ENCODE measurements at regions of chr1 and their contacts with region 1.

Region 1: DNA sequence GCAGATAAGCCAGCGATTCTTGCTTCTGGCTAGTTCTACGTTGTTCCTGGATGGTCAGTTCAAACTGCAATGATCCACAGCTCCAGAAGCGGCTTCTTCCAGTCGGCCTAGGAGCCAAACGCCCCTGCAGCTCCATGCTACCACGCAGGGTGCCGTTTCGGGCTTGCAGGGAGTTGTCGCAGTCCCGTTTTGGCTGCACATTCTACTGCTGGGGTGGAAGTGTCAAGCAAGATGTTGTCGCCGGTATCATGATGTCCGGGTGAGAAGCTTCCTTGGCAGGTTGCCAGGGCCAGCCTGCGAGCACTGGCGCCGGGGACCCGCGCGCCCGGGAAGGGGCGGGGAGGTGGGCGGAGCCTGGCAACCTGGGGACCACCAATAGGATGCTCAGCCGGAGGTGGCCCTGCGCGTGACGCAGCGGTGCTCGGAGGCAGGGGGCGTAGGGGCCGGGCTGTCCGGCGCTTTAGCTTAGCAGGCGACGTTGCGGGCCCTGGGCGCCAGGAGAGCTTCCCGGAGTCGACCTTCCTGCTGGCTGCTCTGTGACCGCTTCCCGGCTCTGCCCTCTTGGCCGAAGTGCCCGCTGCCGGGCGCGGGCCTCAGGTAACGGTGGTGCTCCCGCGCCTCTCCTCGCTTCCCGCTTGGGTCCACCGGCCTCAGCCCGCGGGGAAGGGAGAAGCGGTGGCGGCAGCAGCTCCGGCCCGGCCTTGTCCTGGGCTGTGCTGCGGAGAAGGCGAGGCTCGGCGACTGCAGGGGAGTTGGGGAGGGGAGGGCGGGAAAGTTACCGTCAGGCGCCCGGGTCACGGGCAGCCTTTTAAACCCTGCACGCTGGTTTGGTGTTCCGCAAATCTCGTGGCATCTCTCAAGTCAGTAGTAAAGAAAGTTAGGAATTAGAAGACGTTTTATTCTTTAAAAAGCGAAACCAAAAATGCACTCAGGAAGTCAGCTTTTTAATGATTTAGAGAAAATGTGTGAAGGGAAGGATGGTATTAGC is at the start of gene SOAT1:
- DNase-seq: peak; percentile 76 to 96
- H3K4me3 ChIP-seq: peak within 1 kb of the TSS; percentile 88 to 94
- H3K27ac ChIP-seq: peak within 1 kb of the TSS; percentile 93 to 97
- H3K4me1 ChIP-seq: peaks cover 3 to 10% of the 10 kb centered on the region in 2 donors
- H3K27me3 ChIP-seq: no peaks in the 10 kb centered on the region
- CTCF ChIP-seq: peak in 1 of 3 experiments; percentile 10
- total RNA-seq, gene SOAT1: 10.6 TPM

Region 2: DNA sequence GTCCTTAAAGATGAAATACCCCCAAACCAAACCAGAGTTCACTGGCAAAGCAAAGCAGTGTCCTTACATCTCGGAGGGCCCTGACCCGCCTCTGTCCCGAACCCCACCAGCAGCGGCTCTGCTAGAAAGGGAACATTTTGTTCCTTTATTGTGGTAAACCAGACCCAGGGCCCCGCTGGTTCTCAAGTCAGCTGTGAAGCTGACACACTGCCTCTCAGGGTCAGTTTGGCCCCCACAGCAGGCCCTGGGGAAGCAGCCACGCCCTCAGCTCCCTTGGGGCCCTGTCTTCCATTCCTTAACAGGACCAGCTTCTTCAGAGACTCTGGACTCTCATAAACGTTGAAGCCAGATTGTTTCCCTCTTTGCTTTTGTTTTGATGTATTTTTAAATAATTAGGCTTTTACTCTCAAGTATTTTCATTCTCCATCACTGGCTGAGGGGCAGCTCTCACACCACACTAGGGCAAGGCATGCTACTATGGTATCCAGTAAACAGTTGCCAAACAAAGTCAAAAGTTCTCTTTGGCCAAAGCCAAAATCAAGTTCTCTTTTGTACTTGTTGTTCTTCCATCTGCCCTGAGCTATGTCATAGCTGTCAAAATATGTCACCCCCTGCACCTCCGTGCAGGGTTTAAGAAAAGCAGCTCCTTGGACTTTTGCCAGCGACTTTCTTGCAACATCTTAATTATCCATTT is 361.6 kb before region 1 on chr1:
- intact Hi-C with region 1: loop called (anchors 5 kb)
- DNase-seq: peak in 1 of 2 donors; percentile 93
- H3K4me3 ChIP-seq: no peak overlapping the region
- H3K27ac ChIP-seq: peak overlapping the region; percentile 84 to 86
- H3K4me1 ChIP-seq: peaks cover 22 to 33% of the 10 kb centered on the region in 2 donors
- H3K27me3 ChIP-seq: no peaks in the 10 kb centered on the region
- CTCF ChIP-seq: no peak

Region 3: GRCh38 chr1:179081687-179082332 is 211.8 kb before region 1 on chr1 and contains the start of gene TOR3A:
- intact Hi-C with region 1: loop called (anchors 1 kb)
- DNase-seq: peak; percentile 76 to 95
- H3K4me3 ChIP-seq: peak within 1 kb of the TSS; percentile 74 to 84
- H3K27ac ChIP-seq: peak within 1 kb of the TSS; percentile 83 to 85
- H3K4me1 ChIP-seq: peaks cover 0 to 11% of the 10 kb centered on the region in 2 donors
- H3K27me3 ChIP-seq: no peaks in the 10 kb centered on the region
- CTCF ChIP-seq: peak in 1 of 3 experiments; percentile 2
- total RNA-seq, gene TOR3A: 109 TPM

Region 4: GRCh38 chr1:179190861-179191260 is 102.8 kb before region 1 on chr1:
- intact Hi-C with region 1: no loop called
- DNase-seq: no peak
- H3K4me3 ChIP-seq: no peak overlapping the region
- H3K27ac ChIP-seq: peak overlapping the region in 1 of 2 donors; percentile 4
- H3K4me1 ChIP-seq: no peaks in the 10 kb centered on the region
- H3K27me3 ChIP-seq: no peaks in the 10 kb centered on the region
- CTCF ChIP-seq: no peak

Region 5: DNA sequence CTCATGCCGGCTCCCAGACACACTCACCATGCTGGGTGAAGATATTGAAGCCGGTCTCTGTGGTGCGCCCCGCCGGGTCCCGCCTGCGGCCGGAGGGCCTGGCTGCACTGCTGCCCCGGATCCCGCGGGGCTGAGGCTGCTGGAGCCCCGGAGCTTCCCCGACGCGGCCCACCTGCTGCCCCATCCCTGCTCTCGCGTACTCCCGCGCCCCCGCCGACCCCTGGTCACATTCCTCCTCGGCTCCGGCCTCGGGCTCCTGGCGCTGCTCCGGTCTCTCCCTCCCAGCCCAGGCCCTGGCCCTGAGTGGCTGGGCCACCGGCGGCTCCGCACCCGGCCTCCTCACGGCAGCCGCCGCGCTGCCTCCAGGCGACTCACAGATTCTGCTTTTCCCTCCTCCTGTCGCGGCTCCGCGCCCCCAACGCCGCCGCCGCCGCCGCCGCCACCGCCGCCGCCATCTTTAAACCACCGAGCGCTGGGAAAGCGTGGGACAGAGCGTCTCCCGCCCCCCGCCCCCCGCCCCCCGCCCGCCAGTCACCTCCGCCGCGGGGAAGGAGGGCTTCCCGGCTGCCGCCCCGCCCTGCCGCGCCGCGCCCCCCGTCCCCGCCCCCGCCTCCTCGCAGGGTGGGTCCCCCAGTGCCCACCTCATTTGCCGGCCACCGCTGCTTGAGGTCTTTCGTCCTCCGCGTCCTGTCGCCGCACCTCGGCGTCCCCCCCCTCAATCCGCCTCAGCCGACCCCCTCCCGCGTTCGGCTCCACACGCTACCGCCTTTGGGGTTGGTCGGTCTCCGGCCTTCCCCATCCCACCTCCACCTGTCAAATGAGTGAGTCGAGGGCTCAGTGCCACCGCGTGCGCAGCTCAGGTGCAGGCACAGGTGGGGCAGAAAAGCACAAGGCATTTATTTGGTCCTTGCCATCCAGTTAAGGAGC is 64.2 kb before region 1 on chr1 and contains the start of gene ABL2:
- intact Hi-C with region 1: loop called (anchors 5 kb)
- DNase-seq: peak in 1 of 2 donors; percentile 69
- H3K4me3 ChIP-seq: peak within 1 kb of the TSS; percentile 95 to 100
- H3K27ac ChIP-seq: peak within 1 kb of the TSS; percentile 87 to 95
- H3K4me1 ChIP-seq: peaks cover 0 to 20% of the 10 kb centered on the region in 2 donors
- H3K27me3 ChIP-seq: no peaks in the 10 kb centered on the region
- CTCF ChIP-seq: no peak
- total RNA-seq, gene ABL2: 23.9 TPM

Region 6: GRCh38 chr1:179241523-179242097 is 52.0 kb before region 1 on chr1:
- intact Hi-C with region 1: no loop called
- DNase-seq: no peak
- H3K4me3 ChIP-seq: no peak overlapping the region
- H3K27ac ChIP-seq: no peak overlapping the region
- H3K4me1 ChIP-seq: no peaks in the 10 kb centered on the region
- H3K27me3 ChIP-seq: no peaks in the 10 kb centered on the region
- CTCF ChIP-seq: no peak

Region 7: DNA sequence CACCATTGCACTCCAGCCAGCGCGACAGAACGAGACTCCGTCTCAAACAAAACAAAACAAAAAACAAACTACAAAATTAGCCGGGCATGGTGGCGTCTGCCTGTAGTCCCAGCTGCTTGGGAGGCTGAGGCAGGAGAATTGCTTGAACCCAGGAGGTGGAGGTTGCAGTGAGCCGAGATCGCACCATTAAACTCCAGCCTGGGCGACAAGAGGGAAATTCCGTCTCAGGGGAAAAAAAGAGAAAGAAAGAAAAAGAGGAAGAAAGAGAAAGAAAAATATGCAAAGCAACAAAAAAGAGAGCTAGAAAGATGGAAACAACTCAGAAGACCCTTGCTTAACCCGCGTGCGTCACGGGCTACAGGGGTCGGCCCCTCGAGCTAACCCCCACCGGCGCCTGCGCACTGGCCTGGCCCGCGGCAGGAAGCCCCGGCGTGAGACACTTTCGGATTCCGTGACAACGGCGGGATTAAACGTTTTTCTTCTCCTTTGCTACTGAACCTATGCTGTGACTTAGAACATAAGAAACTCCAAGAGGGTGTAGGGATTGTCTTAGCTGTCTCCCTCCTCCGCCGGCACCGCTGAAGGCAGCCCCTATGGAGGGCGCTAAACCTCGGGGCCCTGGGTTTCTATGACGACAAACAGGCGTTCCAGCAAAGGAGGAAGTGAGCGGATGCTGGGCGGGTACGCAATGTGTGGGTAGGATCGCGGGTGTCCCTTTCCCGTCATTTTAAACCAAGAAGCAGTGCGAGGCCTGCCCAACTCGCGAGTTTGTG is 71.9 kb after region 1 on chr1 and contains the start of gene AXDND1:
- intact Hi-C with region 1: loop called (anchors 1 kb)
- DNase-seq: peak; percentile 54 to 93
- H3K4me3 ChIP-seq: peak within 1 kb of the TSS; percentile 62 to 70
- H3K27ac ChIP-seq: peak within 1 kb of the TSS; percentile 84 to 95
- H3K4me1 ChIP-seq: peaks cover 0 to 6% of the 10 kb centered on the region in 2 donors
- H3K27me3 ChIP-seq: no peaks in the 10 kb centered on the region
- CTCF ChIP-seq: no peak
- total RNA-seq, gene AXDND1: not detected

Region 8: GRCh38 chr1:179545321-179545720 is 251.7 kb after region 1 on chr1:
- intact Hi-C with region 1: no loop called
- DNase-seq: no peak
- H3K4me3 ChIP-seq: no peak overlapping the region
- H3K27ac ChIP-seq: no peak overlapping the region
- H3K4me1 ChIP-seq: no peaks in the 10 kb centered on the region
- H3K27me3 ChIP-seq: no peaks in the 10 kb centered on the region
- CTCF ChIP-seq: no peak

Measured in ascending aorta (tissue), 2 donors.